ENCODE measurements at regions of chr13 and their contacts with region 1.

Region 1: DNA sequence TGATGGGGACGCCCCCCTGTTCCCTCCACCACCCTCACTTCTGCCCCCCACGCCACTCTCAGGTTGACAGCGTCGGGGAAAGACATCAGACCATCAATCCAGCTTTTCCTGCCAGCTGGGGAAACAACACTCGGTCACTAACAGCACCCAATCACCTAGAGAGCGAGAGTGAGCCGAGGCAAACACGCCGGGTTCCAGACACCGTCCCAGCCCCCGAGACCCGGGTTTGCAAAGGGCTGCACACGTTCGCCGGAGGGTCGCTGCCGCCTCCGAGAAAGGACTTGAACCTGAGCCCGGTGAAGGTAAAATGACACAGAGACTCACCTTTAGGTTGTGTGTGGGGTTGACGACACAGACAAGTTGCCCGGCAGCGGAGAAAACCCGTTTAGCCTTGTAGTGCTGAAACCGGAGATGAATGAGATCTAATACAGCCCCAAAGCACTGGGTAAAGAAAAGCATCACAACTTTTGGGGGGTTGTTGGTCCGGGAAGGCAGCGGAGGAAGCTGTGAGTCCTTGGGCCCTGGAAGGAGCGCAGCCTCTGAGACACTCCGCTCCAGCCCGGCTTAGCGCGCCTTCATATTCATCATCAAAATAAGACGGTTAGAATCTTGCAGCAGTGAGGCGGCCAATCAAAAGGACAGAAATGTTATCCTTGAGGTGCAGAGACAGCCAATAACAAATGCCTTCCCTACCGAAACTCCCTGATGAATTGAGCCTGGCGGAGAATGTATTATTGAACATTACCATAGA is at the start of gene SIAH3:
- DNase-seq: peak in 6 of 9 experiments; percentile 12 to 58 (median 26)
- ATAC-seq: peak; percentile 19
- H3K4me3 ChIP-seq: peak within 1 kb of the TSS; percentile 40 to 72
- H3K4me3 Mint-ChIP-seq: peak within 1 kb of the TSS; percentile 89
- H3K27ac ChIP-seq: peak within 1 kb of the TSS in 1 of 2 experiments; percentile 1
- H3K27ac Mint-ChIP-seq: peak within 1 kb of the TSS; percentile 84
- H3K4me1 ChIP-seq: peaks cover 51% of the 10 kb centered on the region
- H3K4me1 Mint-ChIP-seq: peaks cover 56% of the 10 kb centered on the region
- H3K27me3 ChIP-seq: peaks cover 0 to 2% of the 10 kb centered on the region in 2 experiments
- H3K27me3 Mint-ChIP-seq: no peaks in the 10 kb centered on the region
- CTCF ChIP-seq: no peak
- total RNA-seq, gene SIAH3: 0.49 to 0.61 TPM

Region 2: GRCh38 chr13:45950386-45951000 is 99.1 kb after region 1 on chr13:
- CTCF ChIA-PET with region 1: no interaction called
- POLR2A ChIA-PET with region 1: interaction called, 3 read pairs
- intact Hi-C with region 1: loop called in 1 of 2 experiments (anchors 10 kb)
- DNase-seq: peak in 1 of 9 experiments; percentile 16
- ATAC-seq: no peak
- H3K4me3 ChIP-seq: no peak overlapping the region
- H3K4me3 Mint-ChIP-seq: no peak overlapping the region
- H3K27ac ChIP-seq: no peak overlapping the region
- H3K27ac Mint-ChIP-seq: peak overlapping the region; percentile 47
- H3K4me1 ChIP-seq: no peaks in the 10 kb centered on the region
- H3K4me1 Mint-ChIP-seq: no peaks in the 10 kb centered on the region
- H3K27me3 ChIP-seq: no peaks in the 10 kb centered on the region
- H3K27me3 Mint-ChIP-seq: no peaks in the 10 kb centered on the region
- CTCF ChIP-seq: no peak

Measured in CD8-positive, alpha-beta T cell (primary cell).